Activated CD4-positive, alpha-beta T cell treated with anti-CD3 and anti-CD28 coated beads for 36 hours (primary cell): ENCODE measurements at regions of chr11 and their contacts with region 1.

Region 1: GRCh38 chr11:114262681-114263512 is 33.3 kb upstream of the NNMT start:
- DNase-seq: peak; percentile 24
- ATAC-seq: peak; percentile 26
- H3K4me3 Mint-ChIP-seq: no peak overlapping the region
- H3K27ac Mint-ChIP-seq: no peak overlapping the region
- H3K4me1 Mint-ChIP-seq: no peaks in the 10 kb centered on the region
- H3K27me3 Mint-ChIP-seq: peaks cover 4% of the 10 kb centered on the region

Region 2: DNA sequence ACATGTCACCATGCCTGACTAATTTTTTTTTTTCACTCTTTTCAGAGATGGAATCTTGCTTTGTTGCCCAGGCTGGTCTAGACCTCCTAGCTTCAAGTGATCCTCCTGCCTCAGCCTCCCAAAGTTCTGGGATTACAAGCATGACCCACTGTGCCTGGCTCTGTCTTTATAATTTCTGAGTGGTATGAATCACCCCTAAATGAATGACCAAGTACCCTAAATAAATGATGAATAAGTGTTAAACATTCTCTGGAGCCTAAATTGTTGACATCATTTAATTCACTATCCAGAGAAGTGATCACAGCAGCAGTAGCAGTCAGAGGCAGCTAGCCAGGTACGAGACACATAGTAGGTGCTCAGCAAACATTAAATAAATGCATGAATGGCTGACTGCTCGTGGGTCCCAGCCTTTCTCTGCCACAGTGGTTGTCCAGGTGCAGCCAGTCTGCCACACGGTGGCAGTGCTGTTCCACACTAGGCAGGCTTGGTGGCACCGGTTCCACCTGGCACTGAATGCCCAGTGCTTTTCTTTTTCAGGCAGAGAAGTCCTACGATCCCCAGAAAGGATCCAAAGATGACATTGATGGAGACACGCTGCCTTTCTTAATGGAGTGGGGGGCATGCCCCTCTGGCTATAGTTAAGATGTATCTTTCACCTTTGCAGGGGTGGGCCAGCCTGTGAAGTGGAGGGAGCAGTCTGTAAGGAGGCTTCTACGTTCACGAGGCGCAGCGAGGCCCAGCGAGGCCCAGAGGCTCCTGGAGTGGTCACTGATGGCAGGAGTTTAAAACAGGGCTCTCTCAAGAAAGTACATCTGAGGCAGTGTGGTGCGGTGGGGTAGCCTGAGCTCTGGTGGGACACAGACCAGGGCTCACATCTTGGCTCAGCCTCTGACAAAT is 957.2 kb before region 1 on chr11:
- CTCF ChIA-PET with region 1: no interaction called
- POLR2A ChIA-PET with region 1: no interaction called
- intact Hi-C with region 1: loop called in 1 of 2 experiments (anchors 2 kb)
- DNase-seq: peak; percentile 85
- ATAC-seq: peak; percentile 99
- H3K4me3 Mint-ChIP-seq: no peak overlapping the region
- H3K27ac Mint-ChIP-seq: no peak overlapping the region
- H3K4me1 Mint-ChIP-seq: peaks cover 3% of the 10 kb centered on the region
- H3K27me3 Mint-ChIP-seq: peaks cover 6% of the 10 kb centered on the region

Region 3: GRCh38 chr11:113896156-113896879 is 366.6 kb before region 1 on chr11:
- CTCF ChIA-PET with region 1: interaction called, 49 read pairs
- POLR2A ChIA-PET with region 1: interaction called, 7 read pairs
- intact Hi-C with region 1: loop called (anchors 1 kb)
- DNase-seq: peak; percentile 52
- ATAC-seq: peak; percentile 75
- H3K4me3 Mint-ChIP-seq: no peak overlapping the region
- H3K27ac Mint-ChIP-seq: no peak overlapping the region
- H3K4me1 Mint-ChIP-seq: no peaks in the 10 kb centered on the region
- H3K27me3 Mint-ChIP-seq: peaks cover 2% of the 10 kb centered on the region

Region 4: GRCh38 chr11:114036156-114036811 is 226.6 kb before region 1 on chr11:
- CTCF ChIA-PET with region 1: interaction called, 62 read pairs
- POLR2A ChIA-PET with region 1: no interaction called
- intact Hi-C with region 1: loop called (anchors 1 kb)
- DNase-seq: peak; percentile 73
- ATAC-seq: peak; percentile 88
- H3K4me3 Mint-ChIP-seq: no peak overlapping the region
- H3K27ac Mint-ChIP-seq: no peak overlapping the region
- H3K4me1 Mint-ChIP-seq: no peaks in the 10 kb centered on the region
- H3K27me3 Mint-ChIP-seq: peaks cover 7% of the 10 kb centered on the region

Region 5: DNA sequence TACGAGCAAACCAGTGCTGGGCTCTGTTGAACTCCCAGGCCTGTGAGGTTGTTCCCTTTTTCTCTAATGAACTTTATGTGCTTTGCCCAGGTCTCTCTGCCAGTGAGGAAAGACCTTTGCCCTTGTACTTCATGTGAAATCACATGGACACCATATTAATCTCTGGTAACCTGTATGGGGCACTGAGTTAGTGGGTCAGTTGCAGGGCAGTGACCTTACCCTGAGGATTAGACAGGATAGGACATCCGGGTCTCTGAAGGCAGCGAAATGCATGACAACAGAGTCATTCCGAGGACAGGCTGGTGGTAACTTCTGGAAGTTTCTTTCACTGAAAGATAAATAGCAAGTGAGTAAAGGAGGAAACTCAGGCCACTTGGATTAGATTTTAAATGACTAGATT is 109.7 kb before region 1 on chr11:
- CTCF ChIA-PET with region 1: no interaction called
- POLR2A ChIA-PET with region 1: no interaction called
- intact Hi-C with region 1: no loop called
- DNase-seq: no peak
- ATAC-seq: no peak
- H3K4me3 Mint-ChIP-seq: no peak overlapping the region
- H3K27ac Mint-ChIP-seq: no peak overlapping the region
- H3K4me1 Mint-ChIP-seq: peaks cover 35% of the 10 kb centered on the region
- H3K27me3 Mint-ChIP-seq: no peaks in the 10 kb centered on the region

Region 6: GRCh38 chr11:114250993-114251814 is 11.7 kb before region 1 on chr11:
- CTCF ChIA-PET with region 1: interaction called, 36 read pairs
- POLR2A ChIA-PET with region 1: no interaction called
- intact Hi-C with region 1: no loop called
- DNase-seq: no peak
- ATAC-seq: no peak
- H3K4me3 Mint-ChIP-seq: no peak overlapping the region
- H3K27ac Mint-ChIP-seq: no peak overlapping the region
- H3K4me1 Mint-ChIP-seq: no peaks in the 10 kb centered on the region
- H3K27me3 Mint-ChIP-seq: no peaks in the 10 kb centered on the region

Region 7: DNA sequence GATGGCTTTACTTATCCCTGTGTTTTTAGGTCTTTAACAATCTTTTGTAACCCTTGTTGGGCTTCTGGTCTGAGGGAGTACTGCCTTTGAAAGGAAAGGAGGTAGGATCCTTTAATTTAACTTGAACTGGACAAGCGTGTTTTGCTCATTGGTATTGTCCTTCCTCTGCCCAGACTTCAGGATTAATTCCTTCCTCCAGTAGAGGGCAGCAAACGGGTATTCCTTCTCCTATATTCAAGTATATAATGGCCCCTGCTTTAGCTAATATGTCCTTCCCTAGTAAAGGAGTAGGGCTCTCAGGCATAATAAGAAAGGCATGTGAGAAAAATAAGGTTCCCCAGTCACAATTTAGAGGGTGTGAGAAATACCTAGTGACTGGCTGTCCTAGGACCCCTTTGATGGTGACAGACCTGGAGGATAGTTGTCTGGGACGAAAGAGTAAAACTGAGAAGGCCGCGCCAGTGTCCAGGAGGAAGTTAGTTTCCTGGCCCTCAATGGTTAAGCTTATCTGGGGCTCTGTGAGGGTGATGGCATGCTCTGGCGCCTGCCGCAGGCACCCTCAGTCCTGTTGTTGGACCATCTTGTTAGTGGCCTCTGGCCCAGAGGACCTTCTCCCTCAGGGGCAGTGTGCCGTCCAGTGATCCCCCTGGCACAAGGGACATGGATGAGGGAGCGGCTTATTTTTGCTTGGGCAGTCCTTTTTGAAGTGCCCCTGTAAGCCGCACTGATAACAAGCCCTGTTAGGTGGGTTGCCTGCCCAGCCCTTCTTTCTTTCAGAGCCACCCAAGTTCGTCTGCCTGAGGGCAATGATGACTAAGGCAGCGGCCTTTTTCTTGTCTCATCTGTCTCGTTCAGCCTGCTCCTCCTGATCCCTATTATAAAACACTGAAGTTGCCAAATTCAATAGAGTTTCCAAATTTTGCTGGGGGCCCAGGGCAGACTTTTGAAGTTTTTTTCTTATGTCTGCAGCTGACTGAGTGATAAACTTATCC is 85.6 kb after region 1 on chr11:
- CTCF ChIA-PET with region 1: no interaction called
- POLR2A ChIA-PET with region 1: no interaction called
- intact Hi-C with region 1: no loop called
- DNase-seq: peak; percentile 38
- ATAC-seq: no peak
- H3K4me3 Mint-ChIP-seq: no peak overlapping the region
- H3K27ac Mint-ChIP-seq: no peak overlapping the region
- H3K4me1 Mint-ChIP-seq: peaks cover 4% of the 10 kb centered on the region
- H3K27me3 Mint-ChIP-seq: no peaks in the 10 kb centered on the region